HepG2 (cell line): ENCODE measurements at regions of chr1 and their contacts with region 1.

Region 1: DNA sequence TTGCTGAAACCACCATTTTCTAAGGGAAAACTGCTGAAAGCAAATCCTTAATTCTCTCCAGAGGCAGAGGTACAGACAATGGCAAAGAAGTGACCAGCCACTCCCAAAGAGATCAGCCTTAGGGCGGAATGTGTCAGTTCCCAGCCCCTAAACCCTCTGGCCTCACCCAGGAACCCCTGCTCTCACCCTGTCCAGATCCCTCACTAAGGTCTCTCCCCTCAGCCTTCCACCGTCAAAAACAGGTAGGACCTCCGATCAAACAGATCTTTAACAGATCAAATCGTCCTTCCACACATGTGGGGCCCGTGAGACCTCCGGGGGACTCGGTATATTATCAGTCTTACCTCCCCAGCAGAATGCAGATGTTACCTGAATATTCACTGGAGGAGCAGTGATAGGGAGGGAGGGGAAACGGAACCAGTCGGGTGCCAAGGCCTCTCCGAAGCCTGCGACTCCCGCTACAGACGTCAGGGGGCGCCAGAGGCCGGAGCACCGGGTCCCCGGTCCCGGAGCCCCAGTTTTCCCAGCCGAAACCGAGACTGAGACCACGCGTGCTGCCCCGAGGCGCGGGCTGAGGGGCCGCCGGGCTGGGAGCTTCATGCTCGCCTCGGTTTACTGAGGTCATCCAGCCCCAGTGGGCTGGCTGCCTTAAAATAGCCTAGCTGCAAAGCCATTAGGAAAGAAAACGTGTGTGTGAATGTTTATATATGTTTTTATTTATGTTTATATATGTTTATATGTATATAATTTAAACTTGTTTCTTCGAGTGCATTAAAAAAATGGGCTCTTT is 23.6 kb downstream of the GPA33 start:
- DNase-seq: peak; percentile 29
- ATAC-seq: peak; percentile 96
- H3K4me3 ChIP-seq: peak overlapping the region in 1 of 3 experiments; percentile 55; a peak in 1 of 6 replicates
- H3K27ac ChIP-seq: no peak overlapping the region
- H3K4me1 ChIP-seq: no peaks in the 10 kb centered on the region
- H3K27me3 ChIP-seq: peaks cover 3 to 44% of the 10 kb centered on the region in 2 experiments; a peak in 3 of 5 replicates
- CTCF ChIP-seq: peak; percentile 93
- EP300 ChIP-seq: no peak
- POLR2A ChIP-seq: no peak
- RAD21 ChIP-seq: peak; percentile 95

Region 2: DNA sequence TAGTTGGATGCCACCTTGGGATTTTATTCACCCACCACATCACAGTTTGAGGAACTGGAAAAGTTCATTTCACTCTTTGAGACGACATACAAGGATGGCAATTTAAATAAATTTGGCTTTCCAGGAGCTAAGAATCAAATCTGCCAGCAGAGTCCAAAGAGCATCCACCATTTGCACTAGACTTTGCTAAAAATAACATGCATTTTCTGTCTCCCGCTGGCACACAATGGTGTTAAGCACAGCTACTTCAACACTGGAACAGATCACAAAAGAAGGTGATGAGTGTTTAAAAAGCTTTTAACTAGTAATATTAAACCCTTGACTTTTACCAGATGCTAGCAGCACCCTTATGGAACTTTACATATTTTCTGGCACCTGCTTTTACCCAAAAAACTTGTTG is 32.9 kb before region 1 on chr1:
- CTCF ChIA-PET with region 1: no interaction called
- POLR2A ChIA-PET with region 1: no interaction called
- in situ Hi-C with region 1: no loop called
- intact Hi-C with region 1: no loop called
- DNase-seq: no peak
- ATAC-seq: no peak
- H3K4me3 ChIP-seq: no peak overlapping the region
- H3K27ac ChIP-seq: no peak overlapping the region
- H3K4me1 ChIP-seq: no peaks in the 10 kb centered on the region
- H3K27me3 ChIP-seq: no peaks in the 10 kb centered on the region
- CTCF ChIP-seq: no peak
- EP300 ChIP-seq: no peak
- POLR2A ChIP-seq: no peak
- RAD21 ChIP-seq: no peak

Region 3: GRCh38 chr1:167128261-167129227 is 62.0 kb after region 1 on chr1:
- CTCF ChIA-PET with region 1: interaction called, 7 read pairs
- POLR2A ChIA-PET with region 1: no interaction called
- in situ Hi-C with region 1: loop called (anchors 5 kb)
- intact Hi-C with region 1: loop called (anchors 1 kb)
- DNase-seq: no peak
- ATAC-seq: no peak
- H3K4me3 ChIP-seq: no peak overlapping the region
- H3K27ac ChIP-seq: no peak overlapping the region
- H3K4me1 ChIP-seq: no peaks in the 10 kb centered on the region
- H3K27me3 ChIP-seq: peaks cover 9 to 56% of the 10 kb centered on the region in 2 experiments; a peak in 4 of 5 replicates
- CTCF ChIP-seq: no peak
- EP300 ChIP-seq: no peak
- POLR2A ChIP-seq: no peak
- RAD21 ChIP-seq: no peak

Region 4: DNA sequence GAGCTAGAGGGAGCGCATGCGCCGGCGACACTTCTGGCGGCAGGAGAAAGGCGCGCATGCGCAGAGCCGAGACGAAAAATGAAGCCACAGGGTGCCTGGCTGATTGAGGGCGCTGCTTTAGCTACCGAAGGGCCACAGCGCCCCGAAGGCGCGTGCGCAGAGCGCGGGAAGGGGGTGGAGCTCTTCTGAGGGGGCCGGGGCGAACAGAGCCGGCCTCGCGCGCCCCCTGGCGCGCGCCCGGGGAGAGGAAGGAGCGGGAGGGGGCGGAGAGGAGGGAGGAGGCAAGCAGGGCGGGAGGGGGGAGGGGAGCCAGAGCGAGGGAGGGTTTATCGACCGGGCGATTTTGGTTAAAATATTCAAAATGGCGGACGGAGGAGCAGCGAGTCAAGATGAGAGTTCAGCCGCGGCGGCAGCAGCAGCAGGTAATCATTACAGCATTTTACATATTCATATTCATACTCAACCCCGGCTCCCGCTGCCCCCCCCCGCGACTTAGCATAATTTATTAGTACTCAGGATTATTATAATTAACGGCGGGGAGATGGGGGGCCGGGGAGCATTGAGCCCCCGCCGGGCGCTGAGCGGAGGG is 154.1 kb after region 1 on chr1 and contains the start of gene POU2F1:
- CTCF ChIA-PET with region 1: interaction called, 4 read pairs
- POLR2A ChIA-PET with region 1: no interaction called
- in situ Hi-C with region 1: no loop called
- intact Hi-C with region 1: loop called (anchors 1 kb)
- DNase-seq: peak; percentile 95
- ATAC-seq: peak; percentile 65
- H3K4me3 ChIP-seq: peak within 1 kb of the TSS; percentile 85 to 87 (median 87)
- H3K27ac ChIP-seq: peak within 1 kb of the TSS; percentile 96
- H3K4me1 ChIP-seq: peaks cover 39% of the 10 kb centered on the region
- H3K27me3 ChIP-seq: no peaks in the 10 kb centered on the region
- CTCF ChIP-seq: peak; percentile 79
- EP300 ChIP-seq: 0 out of 4 replicates have a peak, but pooled peaks of 1 of the 2 experiments have one; percentile 16
- POLR2A ChIP-seq: peak; percentile 43 to 84; a peak in 3 of 4 replicates
- RAD21 ChIP-seq: no peak
- total RNA-seq, gene POU2F1: 10.2 and 15.1 TPM in 2 replicates

Region 5: GRCh38 chr1:167342846-167343245 is 276.3 kb after region 1 on chr1:
- CTCF ChIA-PET with region 1: no interaction called
- POLR2A ChIA-PET with region 1: no interaction called
- in situ Hi-C with region 1: no loop called
- intact Hi-C with region 1: loop called (anchors 5 kb)
- DNase-seq: peak; percentile 19
- ATAC-seq: peak; percentile 60
- H3K4me3 ChIP-seq: no peak overlapping the region
- H3K27ac ChIP-seq: no peak overlapping the region
- H3K4me1 ChIP-seq: peaks cover 16% of the 10 kb centered on the region
- H3K27me3 ChIP-seq: no peaks in the 10 kb centered on the region
- CTCF ChIP-seq: peak; percentile 47
- EP300 ChIP-seq: no peak
- POLR2A ChIP-seq: no peak
- RAD21 ChIP-seq: 0 out of 2 replicates have a peak, but pooled peaks have one; percentile 31

Region 6: DNA sequence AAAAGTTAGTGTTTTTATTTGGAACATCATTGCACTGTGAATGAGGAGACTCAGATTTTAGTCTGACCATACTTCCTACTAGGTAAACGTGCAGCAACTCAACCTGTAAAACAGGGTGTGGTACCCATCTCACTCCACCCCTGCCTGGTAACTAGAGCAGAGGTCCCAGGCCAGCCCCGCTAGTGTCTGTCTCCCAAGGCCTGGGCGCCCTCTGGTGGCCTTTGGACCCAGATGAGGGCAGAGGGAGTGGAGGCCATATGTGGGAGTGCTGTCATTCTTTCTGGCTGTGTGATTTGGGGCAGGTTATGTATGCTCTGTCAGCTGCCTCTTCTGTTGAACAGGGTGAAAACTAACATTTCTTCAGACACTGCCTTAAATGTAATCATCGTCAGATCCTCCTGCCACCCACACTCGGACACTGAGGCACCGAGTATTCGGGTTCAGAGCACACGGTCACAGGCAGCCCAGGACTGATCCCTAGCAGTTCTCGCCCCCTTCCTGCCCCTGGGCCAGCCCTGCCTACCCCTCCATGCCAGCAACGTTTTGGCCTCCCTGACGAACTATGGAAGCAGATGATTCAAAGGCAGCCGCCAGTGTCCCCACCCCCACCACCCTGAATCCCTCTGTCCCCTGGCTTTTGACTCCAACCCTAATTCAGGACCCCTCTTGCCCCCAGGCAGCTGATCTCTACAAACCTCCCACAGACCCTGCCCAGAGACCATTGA is 375.8 kb after region 1 on chr1:
- CTCF ChIA-PET with region 1: interaction called, 19 read pairs
- POLR2A ChIA-PET with region 1: no interaction called
- in situ Hi-C with region 1: loop called (anchors 5 kb)
- intact Hi-C with region 1: loop called (anchors 1 kb)
- DNase-seq: peak; percentile 70
- ATAC-seq: peak; percentile 95
- H3K4me3 ChIP-seq: peak overlapping the region in 1 of 3 experiments; percentile 36; a peak in 1 of 6 replicates
- H3K27ac ChIP-seq: no peak overlapping the region
- H3K4me1 ChIP-seq: peaks cover 20% of the 10 kb centered on the region
- H3K27me3 ChIP-seq: peaks cover 0 to 32% of the 10 kb centered on the region in 2 experiments; a peak in 2 of 5 replicates
- CTCF ChIP-seq: peak; percentile 97
- EP300 ChIP-seq: no peak
- POLR2A ChIP-seq: no peak
- RAD21 ChIP-seq: peak; percentile 87

Region 7: DNA sequence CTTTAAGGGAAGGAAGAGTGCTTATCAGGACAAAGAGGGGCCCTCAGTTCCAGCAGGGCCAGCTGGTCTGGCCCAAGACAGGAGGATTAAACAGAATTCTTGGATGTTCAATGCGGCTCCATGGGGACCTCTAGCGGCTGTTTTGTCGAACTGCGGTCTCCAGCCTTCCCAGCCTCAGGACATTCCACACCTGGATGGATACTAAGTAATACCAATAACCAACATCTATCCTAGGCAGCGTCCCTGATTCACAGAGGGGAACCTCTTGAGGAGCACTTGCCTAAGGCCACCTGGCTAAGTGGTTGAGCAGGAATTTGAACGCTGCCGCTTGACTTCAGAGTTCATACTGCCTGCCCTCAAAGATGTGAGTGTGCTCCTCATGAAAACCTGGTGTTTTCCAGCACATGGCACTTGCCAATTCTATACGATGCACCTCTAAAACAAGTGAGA is 467.3 kb after region 1 on chr1:
- CTCF ChIA-PET with region 1: interaction called, 13 read pairs
- POLR2A ChIA-PET with region 1: no interaction called
- in situ Hi-C with region 1: loop called (anchors 10 kb)
- intact Hi-C with region 1: loop called (anchors 1 kb)
- DNase-seq: peak; percentile 54
- ATAC-seq: peak; percentile 83
- H3K4me3 ChIP-seq: no peak overlapping the region
- H3K27ac ChIP-seq: no peak overlapping the region
- H3K4me1 ChIP-seq: peaks cover 28% of the 10 kb centered on the region
- H3K27me3 ChIP-seq: no peaks in the 10 kb centered on the region
- CTCF ChIP-seq: peak; percentile 85
- EP300 ChIP-seq: no peak
- POLR2A ChIP-seq: no peak
- RAD21 ChIP-seq: peak; percentile 72